Activated CD4-positive, alpha-beta T cell treated with anti-CD3 and anti-CD28 coated beads for 36 hours (primary cell): ENCODE measurements at regions of chr19 and their contacts with region 1.

Region 1: DNA sequence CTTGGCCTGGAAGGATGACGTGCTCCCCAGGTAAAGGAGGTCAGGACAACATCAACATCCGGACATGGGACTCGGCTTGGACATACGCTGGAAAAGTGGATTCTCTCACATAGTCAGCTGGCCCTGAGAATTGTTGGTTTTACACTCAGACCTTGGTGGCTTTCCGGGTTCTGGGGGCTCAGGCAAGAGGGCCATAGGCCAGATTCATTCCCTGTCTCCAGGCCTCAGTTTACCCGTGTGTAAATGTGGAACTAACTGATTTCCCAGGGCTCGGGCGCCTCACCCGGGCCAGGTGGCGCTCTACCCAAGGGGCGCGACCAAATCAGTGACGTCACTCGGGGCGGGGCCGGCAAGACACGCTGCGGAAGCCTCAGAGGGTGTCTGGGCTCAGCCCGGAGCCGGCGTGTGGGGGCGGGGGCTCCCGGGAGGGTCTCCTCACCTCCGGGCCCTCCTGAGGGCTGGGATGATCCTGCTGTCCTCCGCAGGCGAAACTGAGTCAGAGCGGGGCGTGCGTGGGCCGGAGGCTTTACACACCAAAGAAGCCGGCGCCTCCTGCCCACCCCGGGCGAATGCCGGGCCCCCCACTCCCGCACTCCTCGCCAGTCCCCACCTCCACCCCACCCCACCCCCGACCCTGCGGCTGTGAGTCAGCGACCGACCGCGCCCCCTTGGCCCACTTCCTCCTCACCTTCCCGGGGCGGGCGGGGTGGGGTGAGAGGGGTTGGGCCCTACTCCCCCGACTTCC is 861 bp upstream of the VASP start:
- DNase-seq: peak; percentile 100
- ATAC-seq: peak; percentile 80
- H3K4me3 Mint-ChIP-seq: peak overlapping the region; percentile 85
- H3K27ac Mint-ChIP-seq: peak overlapping the region; percentile 96
- H3K4me1 Mint-ChIP-seq: peaks cover 38% of the 10 kb centered on the region
- H3K27me3 Mint-ChIP-seq: no peaks in the 10 kb centered on the region

Region 2: GRCh38 chr19:44746946-44747738 is 759.3 kb before region 1 on chr19:
- CTCF ChIA-PET with region 1: no interaction called
- POLR2A ChIA-PET with region 1: no interaction called
- intact Hi-C with region 1: loop called in 1 of 2 experiments (anchors 5 kb)
- DNase-seq: peak; percentile 98
- ATAC-seq: peak; percentile 85
- H3K4me3 Mint-ChIP-seq: peak overlapping the region; percentile 91
- H3K27ac Mint-ChIP-seq: peak overlapping the region; percentile 95
- H3K4me1 Mint-ChIP-seq: peaks cover 43% of the 10 kb centered on the region
- H3K27me3 Mint-ChIP-seq: no peaks in the 10 kb centered on the region

Region 3: GRCh38 chr19:45079063-45079910 is 427.1 kb before region 1 on chr19 and contains the start of gene GEMIN7:
- CTCF ChIA-PET with region 1: no interaction called
- POLR2A ChIA-PET with region 1: no interaction called
- intact Hi-C with region 1: loop called in 1 of 2 experiments (anchors 2 kb)
- DNase-seq: peak; percentile 90
- ATAC-seq: peak; percentile 65
- H3K4me3 Mint-ChIP-seq: peak within 1 kb of the TSS; percentile 99
- H3K27ac Mint-ChIP-seq: peak within 1 kb of the TSS; percentile 88
- H3K4me1 Mint-ChIP-seq: peaks cover 43% of the 10 kb centered on the region
- H3K27me3 Mint-ChIP-seq: no peaks in the 10 kb centered on the region
- total RNA-seq, gene GEMIN7: 35.4 to 35.5 TPM

Region 4: DNA sequence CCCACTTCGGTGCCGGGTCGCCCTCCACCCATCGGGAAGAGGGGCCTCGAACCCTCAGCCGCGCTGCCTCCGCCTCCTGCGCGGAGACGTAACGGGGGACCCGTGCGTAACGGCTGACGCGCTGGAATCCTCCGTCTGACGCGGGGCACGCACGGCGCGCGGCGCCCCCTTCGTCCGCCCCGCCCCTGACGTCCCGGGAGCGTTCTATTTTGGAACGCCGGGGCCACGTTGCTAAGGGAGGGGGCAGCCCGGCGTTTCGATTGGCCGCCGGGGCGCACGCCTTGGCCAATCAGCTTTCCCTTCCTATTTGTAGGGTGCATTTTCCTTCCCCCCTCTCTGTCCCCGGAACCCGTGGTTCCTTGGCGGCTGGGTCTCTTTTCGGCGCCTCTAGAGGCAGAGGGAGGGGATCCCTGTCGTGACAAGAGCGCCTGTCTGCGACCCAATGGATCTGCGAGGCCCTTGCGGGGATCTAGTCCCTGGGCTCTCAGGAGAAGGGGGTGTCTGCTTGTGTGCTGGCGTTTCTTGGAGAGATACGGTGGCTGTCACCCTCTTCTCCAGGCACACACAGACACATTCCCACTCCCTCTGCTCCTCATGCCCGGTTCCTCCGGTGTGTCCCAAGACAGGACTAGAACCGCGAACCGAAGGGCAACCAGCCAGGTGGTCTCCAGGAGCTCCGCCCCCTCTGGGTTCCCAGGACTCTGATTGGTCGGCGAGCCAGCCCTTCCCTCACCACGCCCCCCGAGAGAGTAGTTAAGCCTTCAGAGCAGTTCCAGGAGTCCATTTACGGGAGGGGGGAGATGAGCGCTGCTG is 37.1 kb before region 1 on chr19:
- CTCF ChIA-PET with region 1: interaction called, 3 read pairs
- POLR2A ChIA-PET with region 1: no interaction called
- intact Hi-C with region 1: loop called (anchors 1 to 2 kb)
- DNase-seq: peak; percentile 97
- ATAC-seq: peak; percentile 82
- H3K4me3 Mint-ChIP-seq: peak overlapping the region; percentile 78
- H3K27ac Mint-ChIP-seq: peak overlapping the region; percentile 86
- H3K4me1 Mint-ChIP-seq: peaks cover 29% of the 10 kb centered on the region
- H3K27me3 Mint-ChIP-seq: peaks cover 11% of the 10 kb centered on the region

Region 5: GRCh38 chr19:45523642-45524256 is 17.3 kb after region 1 on chr19:
- CTCF ChIA-PET with region 1: interaction called, 4 read pairs
- POLR2A ChIA-PET with region 1: no interaction called
- intact Hi-C with region 1: loop called in 1 of 2 experiments (anchors 1 kb)
- DNase-seq: peak; percentile 84
- ATAC-seq: peak; percentile 99
- H3K4me3 Mint-ChIP-seq: no peak overlapping the region
- H3K27ac Mint-ChIP-seq: peak overlapping the region; percentile 19
- H3K4me1 Mint-ChIP-seq: peaks cover 14% of the 10 kb centered on the region
- H3K27me3 Mint-ChIP-seq: peaks cover 2% of the 10 kb centered on the region

Region 6: GRCh38 chr19:45770192-45771101 is 264.0 kb after region 1 on chr19:
- CTCF ChIA-PET with region 1: no interaction called
- POLR2A ChIA-PET with region 1: no interaction called
- intact Hi-C with region 1: loop called in 1 of 2 experiments (anchors 1 kb)
- DNase-seq: peak; percentile 93
- ATAC-seq: peak; percentile 68
- H3K4me3 Mint-ChIP-seq: peak overlapping the region; percentile 78
- H3K27ac Mint-ChIP-seq: no peak overlapping the region
- H3K4me1 Mint-ChIP-seq: peaks cover 10% of the 10 kb centered on the region
- H3K27me3 Mint-ChIP-seq: peaks cover 10% of the 10 kb centered on the region

Region 7: GRCh38 chr19:45902651-45903625 is 396.5 kb after region 1 on chr19:
- CTCF ChIA-PET with region 1: interaction called, 3 read pairs
- POLR2A ChIA-PET with region 1: no interaction called
- intact Hi-C with region 1: loop called in 1 of 2 experiments (anchors 2 kb)
- DNase-seq: peak; percentile 100
- ATAC-seq: peak; percentile 88
- H3K4me3 Mint-ChIP-seq: peak overlapping the region; percentile 88
- H3K27ac Mint-ChIP-seq: peak overlapping the region; percentile 75
- H3K4me1 Mint-ChIP-seq: peaks cover 16% of the 10 kb centered on the region
- H3K27me3 Mint-ChIP-seq: no peaks in the 10 kb centered on the region